Endothelial cell of umbilical vein (primary cell): ENCODE measurements at regions of chr1 and their contacts with region 1.

Region 1: DNA sequence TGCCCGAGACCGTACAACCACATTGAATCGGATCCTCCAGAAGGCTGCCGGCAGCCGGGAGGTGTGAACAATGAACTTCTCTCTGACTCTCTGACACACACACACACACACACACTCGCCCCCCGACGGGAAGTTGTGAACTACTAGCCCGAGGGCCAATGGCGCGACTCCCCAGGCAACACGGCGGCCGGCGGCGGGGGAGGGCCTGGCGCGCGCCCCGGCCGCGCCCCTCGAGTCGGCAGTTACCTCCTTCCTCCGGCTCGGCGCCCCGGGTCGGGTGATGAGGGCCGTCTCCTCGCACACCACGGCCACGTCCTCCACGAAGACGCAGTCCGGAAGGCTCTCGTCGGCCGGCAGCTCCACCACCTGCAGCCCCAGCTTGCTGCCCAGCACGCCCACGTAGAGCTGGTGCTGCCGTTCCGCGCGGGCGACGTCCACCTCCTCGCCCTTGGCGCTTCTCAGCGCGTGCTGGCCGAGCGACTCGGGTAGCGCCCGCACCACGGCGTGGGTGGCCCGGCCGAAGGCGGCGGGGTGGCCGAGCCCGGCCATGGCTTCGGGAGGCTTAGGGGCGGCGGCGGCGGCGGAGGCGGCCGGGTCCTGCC is 361 bp downstream of the DDAH1 start:
- DNase-seq: peak; percentile 90
- H3K4me3 ChIP-seq: peak overlapping the region; percentile 65 to 97 (median 91)
- H3K27ac ChIP-seq: peak overlapping the region; percentile 90
- H3K4me1 ChIP-seq: peaks cover 39% of the 10 kb centered on the region
- H3K27me3 ChIP-seq: no peaks in the 10 kb centered on the region
- CTCF ChIP-seq: no peak
- POLR2A ChIP-seq: peak; percentile 92

Region 2: GRCh38 chr1:85313888-85314696 is 150.5 kb before region 1 on chr1:
- CTCF ChIA-PET with region 1: interaction called, 48 read pairs
- POLR2A ChIA-PET with region 1: interaction called, 5 read pairs
- dilution Hi-C with region 1: no loop called
- intact Hi-C with region 1: loop called (anchors 1 kb)
- DNase-seq: peak; percentile 87
- H3K4me3 ChIP-seq: no peak overlapping the region
- H3K27ac ChIP-seq: peak overlapping the region; percentile 93
- H3K4me1 ChIP-seq: peaks cover 63% of the 10 kb centered on the region
- H3K27me3 ChIP-seq: no peaks in the 10 kb centered on the region
- CTCF ChIP-seq: no peak
- POLR2A ChIP-seq: peak; percentile 59

Region 3: DNA sequence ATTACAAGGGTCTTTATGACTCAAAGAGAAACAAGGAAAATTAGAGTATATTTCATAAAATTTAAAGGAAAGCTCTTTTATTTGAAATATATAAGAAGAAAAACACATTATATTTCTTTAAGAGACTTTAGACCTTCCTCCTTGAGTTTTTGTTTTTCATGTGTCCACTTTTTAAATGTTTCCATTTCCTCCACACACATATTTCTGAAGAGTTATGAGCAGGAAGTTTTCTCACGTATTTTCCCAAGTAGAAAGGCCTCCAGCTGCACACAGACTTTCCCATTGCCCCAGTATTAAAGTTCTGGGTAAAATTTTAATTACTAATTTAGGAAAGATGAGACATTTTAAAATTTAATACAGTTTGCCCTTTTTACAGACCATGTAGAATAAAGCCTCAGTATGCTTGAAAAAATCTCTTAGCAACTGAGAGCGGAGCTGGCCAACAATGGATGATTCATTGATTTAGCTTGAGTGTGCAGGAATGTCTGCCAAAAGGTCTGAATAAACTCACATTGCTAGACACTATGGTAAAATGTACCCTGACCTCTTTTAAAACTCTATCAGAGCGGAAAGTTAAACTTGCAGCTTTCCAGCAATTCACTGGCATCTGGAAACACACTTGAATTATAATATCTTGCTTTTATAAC is 57.6 kb before region 1 on chr1:
- CTCF ChIA-PET with region 1: interaction called, 8 read pairs
- POLR2A ChIA-PET with region 1: interaction called, 4 read pairs
- dilution Hi-C with region 1: no loop called
- intact Hi-C with region 1: loop called (anchors 1 kb)
- DNase-seq: peak; percentile 96
- H3K4me3 ChIP-seq: peak overlapping the region in 1 of 3 experiments; percentile 46
- H3K27ac ChIP-seq: peak overlapping the region; percentile 91
- H3K4me1 ChIP-seq: peaks cover 32% of the 10 kb centered on the region
- H3K27me3 ChIP-seq: no peaks in the 10 kb centered on the region
- CTCF ChIP-seq: no peak
- POLR2A ChIP-seq: no peak

Region 4: GRCh38 chr1:85448358-85448757 is 16.2 kb before region 1 on chr1:
- CTCF ChIA-PET with region 1: interaction called, 14 read pairs
- POLR2A ChIA-PET with region 1: interaction called, 14 read pairs
- dilution Hi-C with region 1: no loop called
- intact Hi-C with region 1: loop called (anchors 1 kb)
- DNase-seq: peak; percentile 91
- H3K4me3 ChIP-seq: no peak overlapping the region
- H3K27ac ChIP-seq: peak overlapping the region; percentile 98
- H3K4me1 ChIP-seq: peaks cover 34% of the 10 kb centered on the region
- H3K27me3 ChIP-seq: no peaks in the 10 kb centered on the region
- CTCF ChIP-seq: no peak
- POLR2A ChIP-seq: no peak

Region 5: DNA sequence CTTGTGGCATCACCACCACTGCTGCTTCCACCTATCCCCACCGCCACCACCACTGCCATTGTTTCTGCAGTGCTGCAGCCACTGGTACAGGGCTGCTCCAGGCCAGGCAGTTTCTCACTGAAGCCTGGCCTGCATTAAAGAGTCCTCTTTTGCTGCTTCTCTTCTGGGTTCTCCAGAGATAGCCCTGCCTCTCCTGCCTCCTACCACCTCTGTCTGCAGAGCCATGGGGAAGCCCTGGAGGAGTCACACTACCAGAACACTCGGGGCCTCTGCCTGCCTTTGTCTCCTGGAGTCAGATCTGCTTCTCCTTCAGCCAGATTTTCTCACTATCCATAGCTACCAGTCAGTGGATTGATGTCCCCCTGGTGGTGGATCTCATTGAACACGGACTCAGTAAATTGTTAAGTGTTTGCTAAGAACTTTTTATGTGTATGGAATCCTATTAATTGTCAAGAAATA is 38.1 kb after region 1 on chr1:
- CTCF ChIA-PET with region 1: interaction called, 25 read pairs
- POLR2A ChIA-PET with region 1: no interaction called
- dilution Hi-C with region 1: no loop called
- intact Hi-C with region 1: no loop called
- DNase-seq: peak; percentile 87
- H3K4me3 ChIP-seq: no peak overlapping the region
- H3K27ac ChIP-seq: no peak overlapping the region
- H3K4me1 ChIP-seq: no peaks in the 10 kb centered on the region
- H3K27me3 ChIP-seq: no peaks in the 10 kb centered on the region
- CTCF ChIP-seq: peak; percentile 46 to 58
- POLR2A ChIP-seq: no peak

Region 6: DNA sequence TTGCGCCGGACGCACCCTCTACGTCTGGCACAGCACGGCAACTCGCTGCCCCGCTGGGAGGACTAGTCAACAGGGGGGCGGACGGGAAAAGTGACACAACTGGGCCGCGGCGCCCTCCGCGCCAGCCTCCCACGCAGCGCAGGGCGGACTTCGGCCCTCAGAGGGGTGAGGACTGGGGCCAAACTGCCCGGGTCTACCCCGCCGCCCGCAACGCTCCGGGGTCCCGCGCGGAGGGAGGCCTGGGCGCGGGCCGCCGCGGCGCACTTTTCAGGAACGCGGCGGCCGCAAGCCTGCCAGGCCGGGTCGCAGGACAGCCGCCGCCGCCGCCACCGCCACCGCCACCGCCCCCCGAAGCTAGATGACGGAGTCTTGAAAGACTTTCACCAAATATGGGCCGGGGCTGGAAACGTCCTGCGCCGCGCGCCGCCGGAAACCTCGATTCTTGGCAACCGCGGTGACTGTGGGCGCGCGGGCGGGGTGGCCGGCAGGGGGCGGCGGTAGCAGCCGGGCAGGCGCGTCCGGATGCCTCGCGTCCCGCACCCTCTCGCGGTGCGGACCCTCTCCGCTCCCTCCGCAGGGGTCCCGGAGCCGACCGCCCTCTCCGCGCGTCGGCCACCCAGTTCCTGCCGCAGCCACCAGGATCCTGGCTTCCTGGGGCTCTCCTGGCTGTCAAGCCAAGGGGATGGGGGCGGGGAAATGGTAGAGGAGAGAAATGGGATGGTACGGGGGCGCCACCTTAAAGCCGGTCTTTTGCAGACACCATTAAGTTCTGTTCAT is 112.2 kb after region 1 on chr1:
- CTCF ChIA-PET with region 1: interaction called, 10 read pairs
- POLR2A ChIA-PET with region 1: interaction called, 11 read pairs
- dilution Hi-C with region 1: no loop called
- intact Hi-C with region 1: loop called (anchors 1 kb)
- DNase-seq: peak; percentile 87
- H3K4me3 ChIP-seq: peak overlapping the region; percentile 67 to 93 (median 80)
- H3K27ac ChIP-seq: peak overlapping the region; percentile 98
- H3K4me1 ChIP-seq: peaks cover 55% of the 10 kb centered on the region
- H3K27me3 ChIP-seq: no peaks in the 10 kb centered on the region
- CTCF ChIP-seq: peak; percentile 69 to 83
- POLR2A ChIP-seq: peak; percentile 17

Region 7: GRCh38 chr1:85607126-85607912 is 142.7 kb after region 1 on chr1:
- CTCF ChIA-PET with region 1: no interaction called
- POLR2A ChIA-PET with region 1: no interaction called
- dilution Hi-C with region 1: no loop called
- intact Hi-C with region 1: no loop called
- DNase-seq: peak; percentile 91
- H3K4me3 ChIP-seq: peak overlapping the region in 1 of 3 experiments; percentile 4
- H3K27ac ChIP-seq: peak overlapping the region; percentile 85
- H3K4me1 ChIP-seq: peaks cover 27% of the 10 kb centered on the region
- H3K27me3 ChIP-seq: no peaks in the 10 kb centered on the region
- CTCF ChIP-seq: no peak
- POLR2A ChIP-seq: peak; percentile 76

Region 8: DNA sequence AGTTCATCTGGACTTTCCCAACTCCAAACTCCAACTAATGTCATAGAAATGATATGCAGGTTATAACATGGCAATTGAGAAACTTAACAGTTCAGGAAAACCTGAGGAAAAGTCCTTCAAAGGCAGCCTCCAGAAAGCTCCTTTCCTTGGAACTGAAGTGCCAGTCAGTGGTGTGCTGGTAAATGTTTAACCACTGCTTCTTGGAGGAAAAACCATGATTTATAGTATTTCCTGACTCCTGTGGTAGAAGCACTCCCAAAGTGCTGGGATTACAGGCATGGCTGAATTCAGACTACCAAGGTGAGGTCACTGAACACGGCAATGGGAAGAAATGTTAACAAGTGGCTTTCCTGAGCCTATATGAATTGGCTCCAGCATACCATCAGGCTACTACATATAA is 270.3 kb after region 1 on chr1:
- CTCF ChIA-PET with region 1: no interaction called
- POLR2A ChIA-PET with region 1: no interaction called
- dilution Hi-C with region 1: no loop called
- intact Hi-C with region 1: no loop called
- DNase-seq: no peak
- H3K4me3 ChIP-seq: no peak overlapping the region
- H3K27ac ChIP-seq: no peak overlapping the region
- H3K4me1 ChIP-seq: no peaks in the 10 kb centered on the region
- H3K27me3 ChIP-seq: peaks cover 2 to 8% of the 10 kb centered on the region in 2 experiments
- CTCF ChIP-seq: no peak
- POLR2A ChIP-seq: no peak